ENCODE measurements at regions of chr4 and their contacts with region 1.

Region 1: DNA sequence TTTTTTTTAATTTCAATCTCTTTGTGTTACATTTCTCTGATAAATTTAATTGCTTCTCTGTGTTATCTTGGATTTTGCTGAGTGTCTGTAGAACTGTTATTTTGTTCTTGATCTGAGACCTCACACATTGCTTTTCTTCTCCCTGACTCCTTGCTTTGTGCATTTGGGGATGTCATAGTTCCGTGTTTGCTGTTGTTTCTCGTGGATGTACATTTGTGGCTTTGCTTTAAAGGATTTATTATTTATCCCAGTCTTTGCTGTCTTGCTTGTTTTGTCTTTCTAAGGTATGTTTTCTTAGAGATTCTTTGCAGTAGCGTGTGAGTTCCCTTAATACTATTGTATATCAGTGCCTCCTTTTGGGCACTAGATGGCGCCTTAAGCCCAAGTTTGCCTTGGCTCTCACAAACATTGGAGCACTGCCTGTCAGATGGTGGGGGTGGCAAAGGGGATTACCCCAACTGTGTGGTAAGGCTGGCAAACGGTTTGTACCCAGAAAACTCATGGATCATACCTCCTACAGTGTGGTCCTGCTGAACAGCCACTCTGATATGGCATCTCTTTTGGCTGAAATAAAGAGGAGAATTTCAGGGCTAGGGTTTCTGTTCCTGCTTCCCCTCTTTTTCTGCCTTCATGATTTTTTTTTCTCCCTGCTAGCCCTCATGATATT is 96.4 kb downstream of the PGRMC2 start:
- DNase-seq: peak; percentile 67
- ATAC-seq: peak; percentile 71

Region 2: DNA sequence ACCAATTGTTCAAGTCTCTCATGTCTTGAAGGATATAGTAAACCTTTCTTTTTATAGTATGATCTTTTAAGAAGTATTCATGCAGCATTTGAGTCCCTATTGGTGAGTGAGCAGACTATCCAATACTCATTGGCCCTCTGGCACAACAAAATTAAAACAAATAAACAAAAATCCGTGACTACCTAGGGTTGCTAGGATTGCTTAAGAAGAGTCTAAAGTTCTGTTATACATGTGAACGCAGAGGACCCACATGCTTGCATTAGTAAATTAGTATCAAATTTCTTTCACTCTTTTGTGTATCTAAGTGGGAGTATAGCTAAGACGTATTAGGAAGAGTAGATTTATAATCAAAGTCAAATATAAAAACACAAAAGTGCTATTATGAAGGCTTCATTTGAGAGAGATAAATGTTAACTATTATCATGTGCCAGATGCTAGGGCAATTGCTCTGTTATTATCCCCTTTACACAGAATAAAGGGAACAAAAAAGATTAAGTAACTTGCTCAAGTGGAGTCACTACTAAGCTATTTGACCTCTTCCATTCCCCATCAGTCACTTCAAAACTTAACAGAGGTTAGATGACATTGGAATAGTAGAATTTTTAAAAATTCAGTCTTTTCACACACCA is 159.4 kb before region 1 on chr4:
- intact Hi-C with region 1: no loop called
- DNase-seq: no peak
- ATAC-seq: no peak

Region 3: GRCh38 chr4:128271551-128271950 is 80.3 kb after region 1 on chr4:
- intact Hi-C with region 1: loop called (anchors 5 kb)
- DNase-seq: no peak
- ATAC-seq: no peak

Region 4: GRCh38 chr4:128310266-128310697 is 119.0 kb after region 1 on chr4:
- intact Hi-C with region 1: no loop called
- DNase-seq: no peak
- ATAC-seq: peak; percentile 53